Esophagus muscularis mucosa (tissue), 4 donors: ENCODE measurements at regions of chr20 and their contacts with region 1.

Region 1: GRCh38 chr20:49148601-49149000 is 39.5 kb downstream of the STAU1 start:
- DNase-seq: no peak
- H3K4me3 ChIP-seq: no peak overlapping the region
- H3K27ac ChIP-seq: no peak overlapping the region
- H3K4me1 ChIP-seq: peaks cover 0 to 13% (median 3%) of the 10 kb centered on the region in 4 donors
- H3K27me3 ChIP-seq: no peaks in the 10 kb centered on the region
- CTCF ChIP-seq: no peak
- EP300 ChIP-seq: no peak
- POLR2A ChIP-seq: no peak

Region 2: GRCh38 chr20:48928832-48929725 is 219.5 kb before region 1 on chr20:
- intact Hi-C with region 1: no loop called
- DNase-seq: no peak
- H3K4me3 ChIP-seq: peak overlapping the region in 2 of 4 donors; percentile 1 to 10
- H3K27ac ChIP-seq: peak overlapping the region; percentile 72 to 81 (median 76)
- H3K4me1 ChIP-seq: peaks cover 63 to 83% (median 81%) of the 10 kb centered on the region in 4 donors
- H3K27me3 ChIP-seq: no peaks in the 10 kb centered on the region
- CTCF ChIP-seq: no peak
- EP300 ChIP-seq: no peak
- POLR2A ChIP-seq: no peak

Region 3: GRCh38 chr20:49179368-49180277 is 31.0 kb after region 1 on chr20:
- intact Hi-C with region 1: loop called (anchors 5 kb)
- DNase-seq: no peak
- H3K4me3 ChIP-seq: no peak overlapping the region
- H3K27ac ChIP-seq: peak overlapping the region in 1 of 4 donors; percentile 30
- H3K4me1 ChIP-seq: peaks cover 31 to 61% (median 54%) of the 10 kb centered on the region in 4 donors
- H3K27me3 ChIP-seq: no peaks in the 10 kb centered on the region
- CTCF ChIP-seq: no peak
- EP300 ChIP-seq: no peak
- POLR2A ChIP-seq: no peak

Region 4: GRCh38 chr20:49230561-49231193 is 82.1 kb after region 1 on chr20:
- intact Hi-C with region 1: no loop called
- DNase-seq: no peak
- H3K4me3 ChIP-seq: no peak overlapping the region
- H3K27ac ChIP-seq: no peak overlapping the region
- H3K4me1 ChIP-seq: no peaks in the 10 kb centered on the region
- H3K27me3 ChIP-seq: no peaks in the 10 kb centered on the region
- CTCF ChIP-seq: no peak
- EP300 ChIP-seq: no peak
- POLR2A ChIP-seq: no peak